ENCODE measurements at regions of chr5 and their contacts with region 1.

Region 1: GRCh38 chr5:151164686-151165392 is 7.3 kb upstream of the ANXA6 start:
- DNase-seq: peak; percentile 59 to 81
- H3K4me3 ChIP-seq: no peak overlapping the region
- H3K27ac ChIP-seq: no peak overlapping the region
- H3K4me1 ChIP-seq: no peaks in the 10 kb centered on the region
- H3K27me3 ChIP-seq: peaks cover 6% of the 10 kb centered on the region; the same call in 1 of the 2 replicates
- CTCF ChIP-seq: peak; percentile 90

Region 2: GRCh38 chr5:150723845-150724244 is 441.0 kb before region 1 on chr5:
- CTCF ChIA-PET with region 1: no interaction called
- POLR2A ChIA-PET with region 1: no interaction called
- intact Hi-C with region 1: loop called (anchors 10 kb)
- DNase-seq: no peak
- H3K4me3 ChIP-seq: no peak overlapping the region
- H3K27ac ChIP-seq: no peak overlapping the region
- H3K4me1 ChIP-seq: no peaks in the 10 kb centered on the region
- H3K27me3 ChIP-seq: no peaks in the 10 kb centered on the region
- CTCF ChIP-seq: no peak

Region 3: GRCh38 chr5:151002250-151002649 is 162.6 kb before region 1 on chr5:
- CTCF ChIA-PET with region 1: interaction called, 26 read pairs
- POLR2A ChIA-PET with region 1: no interaction called
- intact Hi-C with region 1: loop called (anchors 1 kb)
- DNase-seq: peak in 1 of 2 experiments; percentile 39
- H3K4me3 ChIP-seq: no peak overlapping the region
- H3K27ac ChIP-seq: no peak overlapping the region
- H3K4me1 ChIP-seq: no peaks in the 10 kb centered on the region
- H3K27me3 ChIP-seq: no peaks in the 10 kb centered on the region
- CTCF ChIP-seq: peak; percentile 69

Region 4: DNA sequence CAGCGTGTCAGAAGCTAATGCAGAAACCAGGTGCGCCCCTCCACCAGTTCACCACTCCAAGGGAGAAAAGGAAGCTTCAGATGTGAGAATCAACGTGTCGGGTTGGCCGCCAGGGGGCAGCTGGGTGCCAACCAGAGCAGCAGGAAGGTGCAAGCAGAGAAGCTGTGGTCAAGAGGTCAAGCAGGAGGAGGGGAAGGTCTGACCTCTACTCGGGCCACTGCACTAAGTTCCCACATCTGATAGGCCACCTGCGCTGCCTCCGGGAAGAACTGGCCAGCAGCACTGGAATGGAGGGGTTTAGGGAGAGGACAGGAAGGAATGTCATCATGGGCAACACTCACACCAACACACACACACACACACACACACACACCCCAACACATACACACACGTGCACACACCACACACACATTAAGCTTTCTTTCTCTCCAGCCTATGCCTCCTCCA is 38.6 kb before region 1 on chr5:
- CTCF ChIA-PET with region 1: interaction called, 42 read pairs
- POLR2A ChIA-PET with region 1: no interaction called
- intact Hi-C with region 1: loop called (anchors 1 kb)
- DNase-seq: peak; percentile 46 to 64
- H3K4me3 ChIP-seq: no peak overlapping the region
- H3K27ac ChIP-seq: no peak overlapping the region
- H3K4me1 ChIP-seq: peaks cover 7% of the 10 kb centered on the region
- H3K27me3 ChIP-seq: no peaks in the 10 kb centered on the region
- CTCF ChIP-seq: peak; percentile 89

Region 5: GRCh38 chr5:151584057-151584937 is 419.5 kb after region 1 on chr5:
- CTCF ChIA-PET with region 1: interaction called, 14 read pairs
- POLR2A ChIA-PET with region 1: no interaction called
- intact Hi-C with region 1: no loop called
- DNase-seq: no peak
- H3K4me3 ChIP-seq: no peak overlapping the region
- H3K27ac ChIP-seq: no peak overlapping the region
- H3K4me1 ChIP-seq: no peaks in the 10 kb centered on the region
- H3K27me3 ChIP-seq: peaks cover 3% of the 10 kb centered on the region; the same call in 1 of the 2 replicates
- CTCF ChIP-seq: no peak

Measured in PC-9 (cell line).